Gastrocnemius medialis (tissue), 4 donors: ENCODE measurements at regions of chr20 and their contacts with region 1.

Region 1: DNA sequence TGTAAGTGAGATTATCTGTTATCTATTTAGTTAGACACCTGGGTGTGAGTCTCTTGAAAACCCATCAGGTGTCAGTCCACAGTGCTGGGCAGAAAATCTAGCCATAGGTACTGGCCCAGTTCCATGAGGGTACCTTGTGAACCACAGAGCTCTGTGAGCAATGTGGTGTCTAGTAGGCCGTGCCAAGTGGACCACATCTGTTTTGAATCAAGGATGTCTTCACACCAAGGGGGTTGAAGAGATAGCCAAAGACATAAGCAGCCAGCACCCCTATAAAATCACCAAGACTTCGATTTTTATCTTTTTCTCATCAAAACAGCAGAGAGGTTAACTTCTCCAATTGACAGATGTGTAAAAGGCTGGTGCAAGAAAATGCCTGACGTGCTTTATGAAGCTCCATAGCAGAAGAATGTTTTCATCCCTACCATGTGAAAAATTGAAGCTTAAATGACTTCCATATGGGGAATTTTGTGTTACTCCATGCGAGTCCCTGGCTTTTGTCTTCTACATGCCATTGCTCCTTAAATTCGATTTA is 368.7 kb downstream of the HAO1 start:
- DNase-seq: no peak
- ATAC-seq: no peak
- H3K4me3 ChIP-seq: no peak overlapping the region
- H3K27ac ChIP-seq: no peak overlapping the region
- H3K4me1 ChIP-seq: no peaks in the 10 kb centered on the region
- H3K27me3 ChIP-seq: no peaks in the 10 kb centered on the region
- CTCF ChIP-seq: no peak
- POLR2A ChIP-seq: no peak

Region 2: GRCh38 chr20:7459083-7459482 is 112.5 kb before region 1 on chr20:
- in situ Hi-C with region 1: loop called in 1 of 4 experiments (anchors 25 kb)
- intact Hi-C with region 1: no loop called
- DNase-seq: no peak
- ATAC-seq: no peak
- H3K4me3 ChIP-seq: no peak overlapping the region
- H3K27ac ChIP-seq: no peak overlapping the region
- H3K4me1 ChIP-seq: no peaks in the 10 kb centered on the region
- H3K27me3 ChIP-seq: no peaks in the 10 kb centered on the region
- CTCF ChIP-seq: no peak
- POLR2A ChIP-seq: no peak